Caco-2 (cell line): ENCODE measurements at regions of chr3 and their contacts with region 1.

Region 1: DNA sequence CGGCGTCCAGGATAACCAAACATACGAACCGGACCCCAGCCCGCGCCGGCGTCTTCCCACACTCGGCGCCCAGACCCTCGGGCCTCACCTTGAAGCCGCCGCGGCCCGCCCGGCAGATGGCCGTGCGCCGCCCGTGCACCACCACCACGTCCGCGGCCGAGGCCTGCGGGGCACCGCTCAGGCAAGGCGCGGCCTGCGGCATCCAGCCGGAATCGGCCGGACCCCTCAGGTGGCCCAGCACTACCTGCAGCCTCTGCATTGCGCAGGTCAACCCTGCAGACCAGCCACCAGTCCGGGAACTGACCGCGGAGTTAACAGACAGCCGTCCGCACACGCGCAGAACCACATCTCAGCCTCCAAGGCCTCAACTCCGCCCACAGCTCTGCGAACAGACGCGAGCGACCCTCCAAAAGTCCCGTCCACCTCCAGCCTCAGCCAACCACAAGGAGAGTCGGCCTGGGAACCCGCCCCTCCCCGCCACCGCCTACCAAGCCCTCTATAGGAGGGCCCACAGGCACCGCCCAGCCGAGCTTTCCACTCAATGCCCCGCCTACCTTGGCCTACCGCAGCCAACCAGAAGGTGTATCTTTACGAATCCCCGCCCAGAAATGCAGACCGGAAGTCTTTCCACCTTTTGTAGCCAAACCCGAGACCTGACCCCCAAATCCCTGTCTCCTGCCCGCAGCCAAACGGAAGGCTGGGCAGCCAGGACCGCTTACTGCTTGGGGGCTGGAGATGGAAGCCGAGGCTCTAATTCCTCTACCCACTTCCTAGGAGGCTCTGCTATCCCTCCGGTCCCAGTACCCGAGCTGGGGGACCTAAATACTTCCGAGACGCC is at the start of gene ACAA1:
- DNase-seq: peak; percentile 99
- H3K4me3 ChIP-seq: peak within 1 kb of the TSS; percentile 91
- H3K4me3 Mint-ChIP-seq: peak within 1 kb of the TSS; percentile 95
- H3K27ac Mint-ChIP-seq: peak within 1 kb of the TSS; percentile 82
- H3K4me1 ChIP-seq: peaks cover 44% of the 10 kb centered on the region
- H3K4me1 Mint-ChIP-seq: peaks cover 30% of the 10 kb centered on the region
- H3K27me3 ChIP-seq: no peaks in the 10 kb centered on the region
- H3K27me3 Mint-ChIP-seq: no peaks in the 10 kb centered on the region
- CTCF ChIP-seq: no peak
- total RNA-seq, gene ACAA1: 127 and 139 TPM in 2 replicates

Region 2: DNA sequence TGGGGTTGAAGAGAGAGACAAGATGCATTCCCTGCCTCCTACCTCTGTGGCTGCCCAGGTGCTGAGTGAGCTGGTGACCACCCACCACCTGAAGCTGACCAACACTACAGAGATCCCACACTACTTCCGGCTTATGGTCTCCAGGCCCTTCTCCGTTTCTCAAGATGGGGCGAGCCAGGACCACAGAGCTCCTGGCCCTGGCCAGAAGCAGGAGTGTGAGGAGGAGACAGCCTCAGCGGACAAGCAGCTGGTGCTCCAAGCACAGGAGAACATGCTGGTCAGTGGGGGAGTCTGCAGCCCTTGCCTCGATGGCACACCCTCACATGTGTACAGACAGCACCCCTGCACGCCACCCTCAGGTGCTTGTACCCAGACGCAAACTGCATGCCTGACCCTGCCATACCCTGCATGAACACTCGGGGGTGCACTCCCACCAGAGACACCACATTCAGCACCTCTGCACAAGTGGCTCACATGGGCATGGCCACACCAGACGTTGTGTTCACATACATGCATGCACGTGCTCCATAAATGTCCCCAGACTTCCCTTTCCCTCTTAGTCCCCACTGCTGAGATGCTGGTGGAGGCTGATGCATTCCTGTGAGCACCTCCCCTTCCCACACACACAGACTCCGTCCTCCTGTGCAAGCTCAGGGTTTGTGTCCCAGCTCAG is 19.1 kb before region 1 on chr3:
- CTCF ChIA-PET with region 1: interaction called, 4 read pairs
- POLR2A ChIA-PET with region 1: interaction called, 5 read pairs
- intact Hi-C with region 1: loop called (anchors 1 kb)
- DNase-seq: peak; percentile 82 to 83
- H3K4me3 ChIP-seq: no peak overlapping the region
- H3K4me3 Mint-ChIP-seq: no peak overlapping the region
- H3K27ac Mint-ChIP-seq: peak overlapping the region; percentile 46
- H3K4me1 ChIP-seq: 0 out of 2 replicates have a peak, but pooled peaks cover 3% of the 10 kb centered on the region
- H3K4me1 Mint-ChIP-seq: peaks cover 28% of the 10 kb centered on the region
- H3K27me3 ChIP-seq: no peaks in the 10 kb centered on the region
- H3K27me3 Mint-ChIP-seq: no peaks in the 10 kb centered on the region
- CTCF ChIP-seq: peak; percentile 62 to 85

Region 3: GRCh38 chr3:38124731-38125130 is 12.3 kb before region 1 on chr3:
- CTCF ChIA-PET with region 1: interaction called, 3 read pairs
- POLR2A ChIA-PET with region 1: interaction called, 8 read pairs
- intact Hi-C with region 1: loop called (anchors 1 kb)
- DNase-seq: peak; percentile 53 to 58
- H3K4me3 ChIP-seq: no peak overlapping the region
- H3K4me3 Mint-ChIP-seq: no peak overlapping the region
- H3K27ac Mint-ChIP-seq: peak overlapping the region; percentile 56
- H3K4me1 ChIP-seq: peaks cover 42% of the 10 kb centered on the region
- H3K4me1 Mint-ChIP-seq: peaks cover 27% of the 10 kb centered on the region
- H3K27me3 ChIP-seq: no peaks in the 10 kb centered on the region
- H3K27me3 Mint-ChIP-seq: no peaks in the 10 kb centered on the region
- CTCF ChIP-seq: no peak

Region 4: GRCh38 chr3:38151667-38152275 is 14.8 kb after region 1 on chr3:
- CTCF ChIA-PET with region 1: no interaction called
- POLR2A ChIA-PET with region 1: no interaction called
- intact Hi-C with region 1: no loop called
- DNase-seq: no peak
- H3K4me3 ChIP-seq: no peak overlapping the region
- H3K4me3 Mint-ChIP-seq: no peak overlapping the region
- H3K27ac Mint-ChIP-seq: no peak overlapping the region
- H3K4me1 ChIP-seq: peaks cover 15% of the 10 kb centered on the region
- H3K4me1 Mint-ChIP-seq: no peaks in the 10 kb centered on the region
- H3K27me3 ChIP-seq: no peaks in the 10 kb centered on the region
- H3K27me3 Mint-ChIP-seq: no peaks in the 10 kb centered on the region
- CTCF ChIP-seq: no peak

Region 5: GRCh38 chr3:38164966-38165680 is 28.1 kb after region 1 on chr3 and contains the start of gene OXSR1:
- CTCF ChIA-PET with region 1: interaction called, 16 read pairs
- POLR2A ChIA-PET with region 1: interaction called, 73 read pairs
- intact Hi-C with region 1: loop called (anchors 1 kb)
- DNase-seq: peak; percentile 95 to 99
- H3K4me3 ChIP-seq: peak within 1 kb of the TSS; percentile 78
- H3K4me3 Mint-ChIP-seq: peak within 1 kb of the TSS; percentile 89
- H3K27ac Mint-ChIP-seq: peak within 1 kb of the TSS; percentile 98
- H3K4me1 ChIP-seq: peaks cover 5% of the 10 kb centered on the region
- H3K4me1 Mint-ChIP-seq: peaks cover 25% of the 10 kb centered on the region
- H3K27me3 ChIP-seq: no peaks in the 10 kb centered on the region
- H3K27me3 Mint-ChIP-seq: no peaks in the 10 kb centered on the region
- CTCF ChIP-seq: no peak
- total RNA-seq, gene OXSR1: 39.2 and 39.3 TPM in 2 replicates

Region 6: GRCh38 chr3:38235466-38235865 is 98.5 kb after region 1 on chr3:
- CTCF ChIA-PET with region 1: no interaction called
- POLR2A ChIA-PET with region 1: no interaction called
- intact Hi-C with region 1: loop called (anchors 5 kb)
- DNase-seq: peak in 1 of 2 experiments; percentile 24
- H3K4me3 ChIP-seq: no peak overlapping the region
- H3K4me3 Mint-ChIP-seq: peak overlapping the region; percentile 3
- H3K27ac Mint-ChIP-seq: no peak overlapping the region
- H3K4me1 ChIP-seq: peaks cover 23% of the 10 kb centered on the region
- H3K4me1 Mint-ChIP-seq: peaks cover 14% of the 10 kb centered on the region
- H3K27me3 ChIP-seq: no peaks in the 10 kb centered on the region
- H3K27me3 Mint-ChIP-seq: no peaks in the 10 kb centered on the region
- CTCF ChIP-seq: no peak

Region 7: DNA sequence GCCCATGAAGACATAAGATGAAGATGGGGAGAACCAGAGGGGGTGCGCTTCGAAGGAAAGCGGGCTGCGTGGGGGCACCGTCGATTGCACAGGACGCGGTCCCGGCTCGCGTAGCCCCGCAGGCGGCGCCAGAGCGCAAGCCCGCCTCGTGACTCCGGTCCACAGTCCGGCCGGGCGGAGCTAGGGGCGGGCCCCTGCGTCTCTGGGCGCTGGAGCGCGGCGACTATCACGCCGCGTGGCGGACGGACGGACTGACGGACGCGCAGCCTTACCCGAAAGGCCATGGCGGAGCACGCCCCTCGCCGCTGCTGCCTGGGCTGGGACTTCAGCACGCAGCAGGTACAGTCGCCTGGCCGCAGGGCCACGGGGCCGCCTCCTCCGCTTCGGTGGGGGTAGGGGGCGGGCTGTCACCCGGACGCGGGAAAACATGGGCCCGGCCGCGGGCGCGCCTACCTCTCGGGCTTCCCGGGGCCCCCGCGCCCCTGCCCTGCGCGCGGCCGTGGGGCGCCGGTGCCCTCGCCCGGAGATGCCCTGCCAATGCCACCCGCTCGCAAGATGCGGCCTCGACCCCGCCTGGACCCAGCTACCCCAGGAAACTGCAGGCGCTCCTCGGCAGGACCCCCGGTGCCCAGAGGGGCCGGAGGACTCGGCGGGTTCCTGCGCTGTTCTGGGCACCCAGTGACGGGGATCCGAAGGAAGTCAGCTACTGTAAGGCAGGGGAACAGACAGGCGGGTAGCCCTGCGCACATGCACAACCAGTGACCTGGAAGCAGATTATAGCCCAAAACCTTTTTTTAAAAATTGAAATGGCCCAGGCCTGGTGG is 209.8 kb after region 1 on chr3 and contains the start of gene XYLB:
- CTCF ChIA-PET with region 1: interaction called, 3 read pairs
- POLR2A ChIA-PET with region 1: no interaction called
- intact Hi-C with region 1: loop called (anchors 1 kb)
- DNase-seq: peak; percentile 83 to 92
- H3K4me3 ChIP-seq: peak within 1 kb of the TSS; percentile 99
- H3K4me3 Mint-ChIP-seq: peak within 1 kb of the TSS; percentile 73
- H3K27ac Mint-ChIP-seq: no peak within 1 kb of the TSS
- H3K4me1 ChIP-seq: peaks cover 6% of the 10 kb centered on the region; the same call in 1 of the 2 replicates
- H3K4me1 Mint-ChIP-seq: no peaks in the 10 kb centered on the region
- H3K27me3 ChIP-seq: no peaks in the 10 kb centered on the region
- H3K27me3 Mint-ChIP-seq: no peaks in the 10 kb centered on the region
- CTCF ChIP-seq: peak; percentile 67 to 83
- total RNA-seq, gene XYLB: 18.2 and 20.1 TPM in 2 replicates

Region 8: DNA sequence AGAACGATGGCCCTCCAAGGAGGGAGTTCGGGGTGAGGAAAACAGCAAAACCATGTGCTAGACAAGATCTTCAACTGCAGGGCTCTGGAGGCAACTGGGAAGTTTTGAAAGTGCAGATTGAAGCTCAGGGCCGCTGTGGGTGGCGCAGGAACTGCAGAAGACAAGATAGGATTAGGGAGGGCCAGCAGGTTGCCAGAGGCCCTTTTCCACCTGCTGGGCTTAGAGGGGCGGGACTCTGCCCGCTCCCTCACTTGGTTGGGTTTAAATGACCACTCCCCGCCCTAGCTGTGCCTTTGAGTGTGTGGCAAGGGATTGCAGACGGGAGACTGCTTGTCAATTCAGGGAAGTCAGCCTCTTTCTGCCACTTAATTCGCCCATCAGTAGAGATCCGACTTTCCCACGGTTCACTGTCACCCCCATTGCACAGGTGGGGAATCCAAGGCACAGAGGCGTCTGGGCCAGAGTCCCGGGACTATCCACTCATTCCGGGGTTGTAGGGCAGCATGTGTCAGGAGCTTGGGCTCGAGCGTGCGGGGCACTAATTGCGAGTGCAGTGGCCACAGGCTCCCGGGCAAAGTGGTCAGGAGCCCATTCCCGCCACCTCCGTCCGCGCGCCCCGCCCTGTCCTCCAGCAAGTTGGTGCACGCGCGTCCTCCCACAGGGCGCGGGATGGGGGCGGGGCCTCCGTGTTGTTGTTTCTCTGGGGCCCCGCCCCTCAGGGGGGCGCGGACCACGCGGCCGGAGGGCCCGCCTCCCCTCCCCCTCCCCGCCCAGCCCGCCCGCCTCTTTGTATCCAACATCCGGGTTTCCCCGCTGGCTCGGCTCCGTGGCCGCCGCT is 316.3 kb after region 1 on chr3 and contains the start of gene ACVR2B:
- CTCF ChIA-PET with region 1: interaction called, 3 read pairs
- POLR2A ChIA-PET with region 1: interaction called, 3 read pairs
- intact Hi-C with region 1: loop called (anchors 10 kb)
- DNase-seq: peak; percentile 85
- H3K4me3 ChIP-seq: peak within 1 kb of the TSS; percentile 90
- H3K4me3 Mint-ChIP-seq: peak within 1 kb of the TSS; percentile 98
- H3K27ac Mint-ChIP-seq: peak within 1 kb of the TSS; percentile 89
- H3K4me1 ChIP-seq: peaks cover 6% of the 10 kb centered on the region
- H3K4me1 Mint-ChIP-seq: peaks cover 6% of the 10 kb centered on the region
- H3K27me3 ChIP-seq: no peaks in the 10 kb centered on the region
- H3K27me3 Mint-ChIP-seq: no peaks in the 10 kb centered on the region
- CTCF ChIP-seq: no peak
- total RNA-seq, gene ACVR2B: 20.8 and 21.4 TPM in 2 replicates